ENCODE measurements at regions of chr1 and their contacts with region 1.

Region 1: GRCh38 chr1:79539001-79539400 is 532.5 kb upstream of the ADGRL4 start:
- DNase-seq: no peak
- ATAC-seq: no peak
- H3K4me3 Mint-ChIP-seq: no peak overlapping the region
- H3K27ac Mint-ChIP-seq: no peak overlapping the region
- H3K4me1 Mint-ChIP-seq: no peaks in the 10 kb centered on the region
- H3K27me3 Mint-ChIP-seq: no peaks in the 10 kb centered on the region

Region 2: GRCh38 chr1:79472067-79472656 is 66.8 kb before region 1 on chr1:
- CTCF ChIA-PET with region 1: no interaction called
- POLR2A ChIA-PET with region 1: no interaction called
- intact Hi-C with region 1: loop called in 1 of 2 experiments (anchors 2 kb)
- DNase-seq: no peak
- ATAC-seq: no peak
- H3K4me3 Mint-ChIP-seq: no peak overlapping the region
- H3K27ac Mint-ChIP-seq: no peak overlapping the region
- H3K4me1 Mint-ChIP-seq: no peaks in the 10 kb centered on the region
- H3K27me3 Mint-ChIP-seq: no peaks in the 10 kb centered on the region